Motor neuron (in vitro differentiated cells): ENCODE measurements at regions of chr14 and their contacts with region 1.

Region 1: GRCh38 chr14:60648934-60649874 is at the start of gene SIX1:
- ATAC-seq: peak; percentile 85 to 97 (median 94)
- H3K4me3 ChIP-seq: peak within 1 kb of the TSS; percentile 18 to 41 (median 29)
- H3K27ac ChIP-seq: no peak within 1 kb of the TSS
- H3K4me1 ChIP-seq: peaks cover 0 to 4% of the 10 kb centered on the region in 2 donors
- total RNA-seq, gene SIX1: 0.05 to 38.6 (median 2.6) TPM

Region 2: GRCh38 chr14:60980811-60981632 is 331.8 kb after region 1 on chr14 and contains the starts of genes SLC38A6 and TRMT5:
- in situ Hi-C with region 1: loop called in 1 of 9 experiments (anchors 25 kb)
- ATAC-seq: peak; percentile 91 to 96 (median 94)
- H3K4me3 ChIP-seq: peak within 1 kb of the TSS; percentile 80 to 95 (median 84)
- H3K27ac ChIP-seq: peak within 1 kb of the TSS; percentile 70 to 77
- H3K4me1 ChIP-seq: peaks cover 0 to 24% of the 10 kb centered on the region in 2 donors
- total RNA-seq, gene SLC38A6: 6.6 to 52.5 (median 23.1) TPM
- total RNA-seq, gene TRMT5: 7.9 to 21.2 (median 12.3) TPM

Region 3: GRCh38 chr14:61025251-61026223 is 376.3 kb after region 1 on chr14:
- in situ Hi-C with region 1: loop called in 1 of 9 experiments (anchors 25 kb)
- ATAC-seq: peak in 4 of 8 experiments; percentile 32 to 73 (median 62)
- H3K4me3 ChIP-seq: no peak overlapping the region
- H3K27ac ChIP-seq: no peak overlapping the region
- H3K4me1 ChIP-seq: no peaks in the 10 kb centered on the region